Activated naive CD4-positive, alpha-beta T cell treated with anti-CD3 and anti-CD28 coated beads for 36 hours (primary cell): ENCODE measurements at regions of chr6 and their contacts with region 1.

Region 1: DNA sequence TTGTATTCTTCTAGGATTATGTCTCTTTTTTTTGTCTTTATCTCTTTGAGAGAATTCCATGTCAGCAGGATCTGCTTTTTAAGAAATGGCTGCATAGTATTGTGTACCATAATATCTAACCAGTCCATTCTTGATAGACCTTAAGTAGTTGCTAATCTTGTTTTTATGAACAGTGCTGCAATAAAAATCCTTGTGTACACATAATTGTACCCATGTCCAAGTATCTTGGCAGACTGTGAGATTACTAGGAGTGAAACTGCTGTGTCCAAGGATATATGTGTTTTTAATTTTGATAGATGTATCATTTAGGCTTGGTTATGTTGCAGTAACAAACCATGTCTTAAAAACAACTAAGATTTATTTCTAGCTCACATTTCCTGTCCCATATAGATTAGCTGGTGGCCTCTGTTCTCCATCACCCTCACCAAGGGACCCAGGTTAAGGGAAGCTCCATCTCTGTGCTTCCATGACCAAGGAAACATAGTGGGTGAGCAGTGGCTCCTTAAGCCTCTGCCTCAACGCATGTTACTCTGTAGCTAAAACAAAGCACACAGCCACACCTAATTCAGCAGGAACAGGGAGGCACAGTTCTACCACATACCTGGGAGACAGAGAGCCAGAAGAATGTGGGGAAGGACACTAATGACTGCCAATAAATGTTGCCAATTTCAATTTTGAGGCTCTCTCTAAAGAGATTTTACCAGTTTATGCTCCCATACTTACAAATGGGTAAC is 12.1 kb upstream of the SUMO4 start:
- DNase-seq: no peak
- H3K4me3 Mint-ChIP-seq: no peak overlapping the region
- H3K27ac Mint-ChIP-seq: no peak overlapping the region
- H3K4me1 Mint-ChIP-seq: peaks cover 68% of the 10 kb centered on the region
- H3K27me3 Mint-ChIP-seq: no peaks in the 10 kb centered on the region

Region 2: GRCh38 chr6:149082286-149082707 is 305.6 kb before region 1 on chr6:
- CTCF ChIA-PET with region 1: no interaction called
- intact Hi-C with region 1: no loop called
- DNase-seq: peak; percentile 97
- H3K4me3 Mint-ChIP-seq: no peak overlapping the region
- H3K27ac Mint-ChIP-seq: peak overlapping the region; percentile 41
- H3K4me1 Mint-ChIP-seq: peaks cover 54% of the 10 kb centered on the region
- H3K27me3 Mint-ChIP-seq: no peaks in the 10 kb centered on the region

Region 3: DNA sequence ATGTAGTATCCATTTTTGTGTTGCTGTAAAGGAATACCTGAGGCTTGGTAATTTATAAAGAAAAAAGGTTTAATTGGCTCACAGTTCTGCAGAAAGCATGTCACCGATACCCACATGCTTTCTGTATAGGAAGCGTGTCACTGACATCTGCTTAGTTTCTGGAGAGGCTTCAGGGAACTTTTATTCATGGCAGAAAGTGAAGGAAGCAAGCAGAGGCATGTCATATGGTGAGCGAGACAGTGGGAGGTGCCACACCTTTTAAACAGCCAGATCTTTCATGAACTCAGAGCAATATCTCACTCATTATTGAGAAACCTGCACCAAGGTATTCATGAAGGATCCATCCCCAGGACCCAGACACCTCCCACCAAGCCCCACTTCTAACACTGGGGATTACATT is 15.6 kb after region 1 on chr6:
- CTCF ChIA-PET with region 1: interaction called, 3 read pairs
- intact Hi-C with region 1: loop called (anchors 2 kb)
- DNase-seq: no peak
- H3K4me3 Mint-ChIP-seq: no peak overlapping the region
- H3K27ac Mint-ChIP-seq: peak overlapping the region; percentile 66
- H3K4me1 Mint-ChIP-seq: peaks cover 30% of the 10 kb centered on the region
- H3K27me3 Mint-ChIP-seq: no peaks in the 10 kb centered on the region